Activated CD4-positive, alpha-beta memory T cell treated with anti-CD3 and anti-CD28 coated beads for 36 hours (primary cell): ENCODE measurements at regions of chr17 and their contacts with region 1.

Region 1: DNA sequence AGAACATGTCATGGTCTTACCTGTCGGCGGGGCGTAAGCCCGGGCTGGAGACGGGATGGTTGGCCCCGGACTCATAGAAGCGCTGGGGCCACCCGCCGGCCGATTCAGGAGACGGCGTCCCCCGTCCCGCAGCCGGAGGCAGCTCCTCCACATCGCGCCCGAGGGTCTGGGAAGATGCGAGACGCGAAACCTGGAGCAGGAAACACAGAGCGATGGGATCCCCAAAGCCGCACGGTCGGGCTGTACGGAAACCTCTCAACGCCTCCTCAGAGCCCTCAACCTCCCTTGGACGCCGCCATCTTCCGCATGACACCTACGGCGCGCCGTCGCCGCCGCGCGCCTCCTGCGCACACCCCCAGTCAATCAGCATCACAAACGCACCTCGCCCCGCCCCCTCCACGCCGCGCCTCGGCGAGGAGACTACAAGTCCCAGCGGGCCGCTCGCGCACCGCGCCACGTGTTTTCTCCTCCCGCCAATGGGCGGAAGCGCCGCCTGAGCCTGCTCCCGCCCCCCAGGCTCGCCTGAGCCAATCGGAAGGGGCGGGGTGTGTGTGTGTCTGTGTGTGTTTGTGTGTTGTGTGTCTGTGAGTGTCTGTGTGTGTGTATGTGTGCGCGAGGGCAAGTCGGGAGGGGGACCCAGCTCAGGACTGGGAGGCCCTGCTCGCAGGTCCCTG is at the starts of genes ATPAF2 and GID4:
- DNase-seq: peak; percentile 100
- H3K4me3 Mint-ChIP-seq: peak within 1 kb of the TSS; percentile 92
- H3K27ac Mint-ChIP-seq: peak within 1 kb of the TSS; percentile 80
- H3K4me1 Mint-ChIP-seq: peaks cover 40% of the 10 kb centered on the region
- H3K27me3 Mint-ChIP-seq: no peaks in the 10 kb centered on the region
- total RNA-seq, gene ATPAF2: 27.5 to 30.0 TPM
- total RNA-seq, gene GID4: 6.1 to 6.2 TPM

Region 2: DNA sequence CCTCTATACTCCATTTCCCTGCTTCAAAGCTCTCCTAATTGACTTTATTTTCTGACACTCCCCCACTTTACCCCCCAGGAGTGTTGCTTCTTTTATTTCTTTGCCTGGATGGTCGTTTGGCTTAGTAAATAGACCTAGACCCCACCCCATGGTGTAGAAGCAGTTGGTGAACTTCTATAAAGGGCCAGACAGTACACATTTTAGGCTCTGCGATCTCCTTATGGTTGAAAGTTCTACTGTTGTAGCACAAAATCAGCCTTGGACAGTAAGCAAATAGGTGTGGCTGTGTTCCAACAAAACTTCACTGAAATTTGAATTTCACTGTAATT is 1501.9 kb before region 1 on chr17:
- CTCF ChIA-PET with region 1: no interaction called
- POLR2A ChIA-PET with region 1: no interaction called
- intact Hi-C with region 1: loop called (anchors 5 kb)
- DNase-seq: no peak
- H3K4me3 Mint-ChIP-seq: no peak overlapping the region
- H3K27ac Mint-ChIP-seq: no peak overlapping the region
- H3K4me1 Mint-ChIP-seq: peaks cover 14% of the 10 kb centered on the region
- H3K27me3 Mint-ChIP-seq: peaks cover 2% of the 10 kb centered on the region

Region 3: DNA sequence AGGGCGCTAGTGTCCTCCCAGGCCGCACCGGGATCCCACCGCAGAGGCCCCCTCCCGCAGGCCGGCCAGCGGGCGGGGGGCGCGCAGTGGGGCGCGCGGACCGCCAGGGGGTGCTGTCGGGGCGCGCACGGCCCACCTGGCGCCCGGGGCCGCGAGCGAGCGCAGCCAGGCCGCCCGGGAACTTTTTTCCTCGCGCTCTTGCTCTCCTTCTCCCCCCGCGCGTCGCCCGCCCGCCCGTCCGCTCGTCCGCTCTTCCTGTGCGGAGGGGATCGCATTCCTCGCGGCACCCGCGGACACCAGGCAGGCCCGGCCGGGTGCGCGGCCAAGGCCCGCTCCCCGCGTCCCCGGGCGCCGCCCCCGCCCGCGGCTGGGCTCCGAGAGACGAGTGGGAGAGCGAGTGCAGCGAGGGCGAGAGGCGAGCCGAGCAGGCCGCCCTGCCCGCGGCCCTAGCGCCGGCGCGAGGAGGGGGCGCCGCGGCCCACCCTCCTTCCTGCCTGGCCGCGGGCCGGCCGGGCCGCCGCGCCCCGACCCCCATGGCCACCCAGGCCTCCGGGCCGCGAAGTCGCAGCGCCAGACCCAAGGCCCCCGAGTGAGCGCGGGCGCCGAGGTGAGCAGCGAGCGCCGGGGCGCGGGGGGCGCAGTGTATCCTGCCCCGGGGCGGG is 357.7 kb before region 1 on chr17 and contains the start of gene RAI1:
- CTCF ChIA-PET with region 1: interaction called, 13 read pairs
- POLR2A ChIA-PET with region 1: no interaction called
- intact Hi-C with region 1: loop called (anchors 2 kb)
- DNase-seq: peak; percentile 77
- H3K4me3 Mint-ChIP-seq: peak within 1 kb of the TSS; percentile 87
- H3K27ac Mint-ChIP-seq: peak within 1 kb of the TSS; percentile 78
- H3K4me1 Mint-ChIP-seq: peaks cover 24% of the 10 kb centered on the region
- H3K27me3 Mint-ChIP-seq: no peaks in the 10 kb centered on the region
- total RNA-seq, gene RAI1: 10.5 to 11.0 TPM

Region 4: GRCh38 chr17:17942846-17943245 is 96.2 kb before region 1 on chr17:
- CTCF ChIA-PET with region 1: no interaction called
- POLR2A ChIA-PET with region 1: no interaction called
- intact Hi-C with region 1: no loop called
- DNase-seq: no peak
- H3K4me3 Mint-ChIP-seq: no peak overlapping the region
- H3K27ac Mint-ChIP-seq: no peak overlapping the region
- H3K4me1 Mint-ChIP-seq: peaks cover 17% of the 10 kb centered on the region
- H3K27me3 Mint-ChIP-seq: no peaks in the 10 kb centered on the region

Region 5: DNA sequence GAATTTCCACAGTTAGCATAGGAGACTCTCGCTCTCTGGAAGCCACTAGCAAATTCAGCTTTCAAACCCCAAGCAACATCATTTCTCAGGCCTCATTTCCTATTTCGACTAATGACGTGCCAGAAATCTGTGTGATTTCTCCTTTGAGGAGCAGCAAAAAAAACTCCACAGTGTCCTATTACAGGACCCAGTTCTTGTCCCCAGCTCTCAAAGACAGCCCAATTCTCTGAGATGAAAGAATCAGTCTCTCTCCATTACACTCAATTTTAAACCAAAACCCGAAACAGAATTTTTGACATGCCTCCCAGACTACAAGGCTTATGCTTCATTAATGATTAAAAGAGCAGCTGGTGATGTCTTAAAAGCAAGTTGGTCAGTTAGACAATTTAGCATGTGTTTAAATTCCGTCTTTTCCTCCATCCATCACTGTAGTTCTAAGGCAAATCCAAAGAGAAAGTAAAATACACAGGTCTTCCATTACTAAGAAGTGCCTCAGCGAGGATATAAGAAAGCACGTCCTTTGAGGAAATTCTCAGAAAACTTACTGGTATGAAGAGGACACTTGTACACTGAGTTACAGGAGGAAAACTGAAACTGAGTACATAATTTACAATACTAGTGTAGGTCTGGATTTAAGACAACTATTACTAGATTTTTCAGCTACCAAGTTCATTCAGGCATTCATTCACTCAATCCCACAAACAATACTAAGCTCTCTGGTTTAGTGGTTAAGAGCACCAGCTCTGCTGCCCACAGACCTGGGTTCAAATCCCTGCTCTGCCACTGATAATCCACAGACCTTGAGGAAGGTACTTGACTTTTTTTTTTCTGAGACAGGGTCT is 79.3 kb before region 1 on chr17:
- CTCF ChIA-PET with region 1: interaction called, 3 read pairs
- POLR2A ChIA-PET with region 1: interaction called, 6 read pairs
- intact Hi-C with region 1: loop called (anchors 1 kb)
- DNase-seq: peak; percentile 63
- H3K4me3 Mint-ChIP-seq: peak overlapping the region; percentile 78
- H3K27ac Mint-ChIP-seq: peak overlapping the region; percentile 99
- H3K4me1 Mint-ChIP-seq: peaks cover 53% of the 10 kb centered on the region
- H3K27me3 Mint-ChIP-seq: no peaks in the 10 kb centered on the region

Region 6: DNA sequence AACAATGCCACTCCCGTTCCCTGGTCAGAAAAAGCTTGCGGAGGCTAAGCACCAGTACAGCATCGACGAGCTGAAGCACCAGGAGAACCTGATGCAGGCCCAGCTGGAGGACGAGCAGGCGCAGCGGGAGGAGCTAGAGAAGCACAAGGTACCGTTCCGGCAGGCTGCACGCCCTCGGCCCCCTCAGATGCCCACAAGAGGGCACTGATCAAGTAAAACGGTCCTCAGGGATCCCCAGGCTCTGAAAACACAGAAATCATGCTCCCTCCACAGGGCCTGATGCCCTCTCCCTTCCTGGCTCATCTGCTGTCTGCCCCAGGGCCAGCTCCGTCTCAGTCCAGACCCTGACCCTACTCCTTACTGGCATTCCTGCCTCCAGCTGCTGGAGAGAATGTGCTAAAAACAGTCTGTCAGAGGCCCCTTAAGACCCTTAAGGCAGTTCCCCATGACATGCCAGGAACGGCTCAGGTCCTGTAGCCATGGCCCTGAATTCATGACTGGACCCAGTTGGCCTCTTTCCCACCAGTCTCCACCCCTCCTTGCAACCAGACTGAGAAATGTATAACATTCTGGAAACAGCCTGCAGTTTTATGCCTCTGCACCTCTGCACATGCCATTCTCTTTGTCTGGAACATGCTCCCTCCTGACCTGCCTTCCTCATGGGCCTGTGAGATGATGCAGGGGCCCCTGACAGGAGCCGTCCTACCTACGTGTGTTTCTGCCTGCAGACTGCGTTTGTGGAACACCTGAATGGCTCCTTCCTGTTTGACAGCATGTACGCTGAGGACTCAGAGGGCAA is 44.5 kb before region 1 on chr17:
- CTCF ChIA-PET with region 1: interaction called, 7 read pairs
- POLR2A ChIA-PET with region 1: no interaction called
- intact Hi-C with region 1: loop called (anchors 5 kb)
- DNase-seq: peak; percentile 15
- H3K4me3 Mint-ChIP-seq: no peak overlapping the region
- H3K27ac Mint-ChIP-seq: no peak overlapping the region
- H3K4me1 Mint-ChIP-seq: no peaks in the 10 kb centered on the region
- H3K27me3 Mint-ChIP-seq: no peaks in the 10 kb centered on the region

Region 7: DNA sequence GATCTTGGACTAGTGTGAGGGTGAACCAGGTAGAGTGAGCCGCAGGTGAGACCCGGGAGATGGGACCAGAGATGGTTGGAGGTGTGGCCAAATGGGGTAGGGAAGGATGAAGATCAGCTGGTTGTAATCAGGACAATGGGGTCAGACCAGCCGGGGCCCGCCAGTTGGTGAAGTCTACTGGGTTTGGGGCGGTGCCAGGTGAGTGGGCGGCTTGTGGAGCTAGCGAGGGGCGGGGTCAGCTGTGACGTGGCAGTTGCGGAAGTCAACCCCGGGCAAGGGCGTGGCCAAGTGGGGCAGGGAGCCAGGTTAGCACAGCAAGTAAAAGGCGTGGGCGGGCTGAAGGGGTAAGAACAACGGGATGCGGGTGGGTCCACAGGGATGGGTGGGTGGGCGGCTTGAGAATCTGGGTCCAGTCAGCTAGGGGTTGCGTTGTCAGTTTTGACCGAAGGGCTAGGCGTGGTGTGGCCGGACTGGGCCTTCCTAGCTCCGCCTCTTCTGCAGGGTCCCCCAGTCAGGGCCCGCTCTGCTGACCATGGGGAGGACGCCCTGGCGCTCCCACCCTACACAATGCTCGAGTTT is 119.1 kb after region 1 on chr17:
- CTCF ChIA-PET with region 1: no interaction called
- POLR2A ChIA-PET with region 1: no interaction called
- intact Hi-C with region 1: no loop called
- DNase-seq: peak; percentile 98
- H3K4me3 Mint-ChIP-seq: peak overlapping the region; percentile 59
- H3K27ac Mint-ChIP-seq: peak overlapping the region; percentile 64
- H3K4me1 Mint-ChIP-seq: peaks cover 13% of the 10 kb centered on the region
- H3K27me3 Mint-ChIP-seq: no peaks in the 10 kb centered on the region

Region 8: GRCh38 chr17:18314731-18315561 is 275.9 kb after region 1 on chr17 and contains the starts of genes SMCR8 and TOP3A:
- CTCF ChIA-PET with region 1: no interaction called
- POLR2A ChIA-PET with region 1: no interaction called
- intact Hi-C with region 1: loop called (anchors 1 kb)
- DNase-seq: peak; percentile 99
- H3K4me3 Mint-ChIP-seq: peak within 1 kb of the TSS; percentile 95
- H3K27ac Mint-ChIP-seq: peak within 1 kb of the TSS; percentile 98
- H3K4me1 Mint-ChIP-seq: peaks cover 73% of the 10 kb centered on the region
- H3K27me3 Mint-ChIP-seq: no peaks in the 10 kb centered on the region
- total RNA-seq, gene SMCR8: 11.1 to 11.3 TPM
- total RNA-seq, gene TOP3A: 52.4 to 53.0 TPM